ENCODE measurements at regions of chr11 and their contacts with region 1.

Region 1: GRCh38 chr11:17978553-17979287 is 34.1 kb downstream of the SERGEF start:
- DNase-seq: peak; percentile 47
- H3K4me3 ChIP-seq: no peak overlapping the region
- H3K27ac ChIP-seq: no peak overlapping the region
- H3K4me1 ChIP-seq: no peaks in the 10 kb centered on the region
- H3K27me3 ChIP-seq: no peaks in the 10 kb centered on the region
- CTCF ChIP-seq: peak; percentile 66

Region 2: GRCh38 chr11:17354601-17354991 is 624.1 kb before region 1 on chr11:
- CTCF ChIA-PET with region 1: no interaction called
- POLR2A ChIA-PET with region 1: no interaction called
- intact Hi-C with region 1: no loop called
- DNase-seq: peak; percentile 84
- H3K4me3 ChIP-seq: peak overlapping the region; percentile 56
- H3K27ac ChIP-seq: no peak overlapping the region
- H3K4me1 ChIP-seq: peaks cover 4% of the 10 kb centered on the region
- H3K27me3 ChIP-seq: no peaks in the 10 kb centered on the region
- CTCF ChIP-seq: peak; percentile 74

Region 3: GRCh38 chr11:17598700-17599459 is 379.8 kb before region 1 on chr11:
- CTCF ChIA-PET with region 1: interaction called, 8 read pairs
- POLR2A ChIA-PET with region 1: no interaction called
- intact Hi-C with region 1: loop called (anchors 1 kb)
- DNase-seq: peak; percentile 67
- H3K4me3 ChIP-seq: no peak overlapping the region
- H3K27ac ChIP-seq: no peak overlapping the region
- H3K4me1 ChIP-seq: no peaks in the 10 kb centered on the region
- H3K27me3 ChIP-seq: no peaks in the 10 kb centered on the region
- CTCF ChIP-seq: peak; percentile 84

Region 4: GRCh38 chr11:17730608-17731462 is 247.9 kb before region 1 on chr11:
- CTCF ChIA-PET with region 1: interaction called, 55 read pairs
- POLR2A ChIA-PET with region 1: no interaction called
- intact Hi-C with region 1: loop called (anchors 1 kb)
- DNase-seq: peak; percentile 84
- H3K4me3 ChIP-seq: no peak overlapping the region
- H3K27ac ChIP-seq: no peak overlapping the region
- H3K4me1 ChIP-seq: no peaks in the 10 kb centered on the region
- H3K27me3 ChIP-seq: peaks cover 24% of the 10 kb centered on the region
- CTCF ChIP-seq: peak; percentile 68

Region 5: DNA sequence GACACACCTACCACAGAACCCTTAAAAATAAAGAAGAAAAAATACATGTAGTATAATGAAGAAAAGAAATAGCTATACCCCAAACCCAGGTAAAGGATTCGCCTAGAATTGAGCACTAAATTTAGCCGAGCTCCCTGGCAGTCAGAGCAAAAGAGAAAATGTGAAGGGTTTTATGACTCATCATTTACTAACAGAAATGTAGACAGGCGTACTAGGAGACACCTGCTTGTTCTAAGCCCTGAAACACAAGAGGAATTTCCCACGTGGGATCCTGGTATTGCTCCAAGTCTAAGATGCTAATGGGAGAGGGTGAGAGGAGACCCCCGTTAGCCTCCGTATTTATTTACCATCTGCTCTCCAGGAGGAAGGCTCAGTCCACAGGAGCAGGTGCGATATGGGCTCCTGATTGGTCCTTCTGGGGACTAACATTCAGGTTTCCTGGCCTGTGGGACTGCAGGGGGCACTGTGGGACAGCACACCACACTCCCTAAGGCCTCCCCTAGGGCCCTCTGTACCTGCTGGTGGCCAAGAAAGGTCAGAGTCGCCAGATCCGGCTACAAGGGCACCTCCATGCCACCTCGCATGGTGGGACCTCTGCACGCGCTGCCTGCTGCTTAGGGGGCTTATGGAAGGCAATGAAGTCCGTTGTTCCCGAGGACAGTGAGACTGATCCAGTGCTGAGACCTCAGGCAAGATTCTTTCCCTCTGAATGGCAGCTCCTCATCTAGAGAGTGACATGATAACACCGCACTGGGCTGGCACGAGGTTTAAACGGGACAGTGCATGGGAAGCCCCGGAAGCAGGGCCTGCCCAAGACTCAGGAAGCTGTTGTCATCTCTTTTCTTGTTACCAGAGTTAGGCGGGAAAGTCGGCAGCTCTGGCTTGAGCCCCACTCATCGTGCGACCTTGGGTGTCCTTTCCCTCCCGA is 218.4 kb before region 1 on chr11:
- CTCF ChIA-PET with region 1: interaction called, 3 read pairs
- POLR2A ChIA-PET with region 1: no interaction called
- intact Hi-C with region 1: loop called (anchors 1 kb)
- DNase-seq: peak; percentile 39
- H3K4me3 ChIP-seq: no peak overlapping the region
- H3K27ac ChIP-seq: no peak overlapping the region
- H3K4me1 ChIP-seq: no peaks in the 10 kb centered on the region
- H3K27me3 ChIP-seq: no peaks in the 10 kb centered on the region
- CTCF ChIP-seq: peak; percentile 55

Region 6: GRCh38 chr11:17890325-17890724 is 88.4 kb before region 1 on chr11:
- CTCF ChIA-PET with region 1: interaction called, 18 read pairs
- POLR2A ChIA-PET with region 1: no interaction called
- intact Hi-C with region 1: no loop called
- DNase-seq: no peak
- H3K4me3 ChIP-seq: no peak overlapping the region
- H3K27ac ChIP-seq: no peak overlapping the region
- H3K4me1 ChIP-seq: peaks cover 15% of the 10 kb centered on the region
- H3K27me3 ChIP-seq: no peaks in the 10 kb centered on the region
- CTCF ChIP-seq: peak; percentile 37

Measured in A673 (cell line).